ENCODE measurements at regions of chr20 and their contacts with region 1.

Region 1: GRCh38 chr20:62121776-62122631 is at the start of gene LSM14B:
- DNase-seq: peak; percentile 99
- ATAC-seq: peak; percentile 86
- H3K4me3 ChIP-seq: peak within 1 kb of the TSS; percentile 36 to 78 (median 62)
- H3K4me3 Mint-ChIP-seq: peak within 1 kb of the TSS; percentile 92
- H3K27ac ChIP-seq: peak within 1 kb of the TSS; percentile 65 to 91
- H3K27ac Mint-ChIP-seq: peak within 1 kb of the TSS; percentile 90
- H3K4me1 ChIP-seq: peaks cover 18 to 29% of the 10 kb centered on the region in 2 donors
- H3K4me1 Mint-ChIP-seq: peaks cover 21% of the 10 kb centered on the region
- H3K27me3 ChIP-seq: no peaks in the 10 kb centered on the region
- H3K27me3 Mint-ChIP-seq: peaks cover 2% of the 10 kb centered on the region
- CTCF ChIP-seq: no peak
- total RNA-seq, gene LSM14B: 52.8 and 55.0 TPM in 2 replicates

Region 2: DNA sequence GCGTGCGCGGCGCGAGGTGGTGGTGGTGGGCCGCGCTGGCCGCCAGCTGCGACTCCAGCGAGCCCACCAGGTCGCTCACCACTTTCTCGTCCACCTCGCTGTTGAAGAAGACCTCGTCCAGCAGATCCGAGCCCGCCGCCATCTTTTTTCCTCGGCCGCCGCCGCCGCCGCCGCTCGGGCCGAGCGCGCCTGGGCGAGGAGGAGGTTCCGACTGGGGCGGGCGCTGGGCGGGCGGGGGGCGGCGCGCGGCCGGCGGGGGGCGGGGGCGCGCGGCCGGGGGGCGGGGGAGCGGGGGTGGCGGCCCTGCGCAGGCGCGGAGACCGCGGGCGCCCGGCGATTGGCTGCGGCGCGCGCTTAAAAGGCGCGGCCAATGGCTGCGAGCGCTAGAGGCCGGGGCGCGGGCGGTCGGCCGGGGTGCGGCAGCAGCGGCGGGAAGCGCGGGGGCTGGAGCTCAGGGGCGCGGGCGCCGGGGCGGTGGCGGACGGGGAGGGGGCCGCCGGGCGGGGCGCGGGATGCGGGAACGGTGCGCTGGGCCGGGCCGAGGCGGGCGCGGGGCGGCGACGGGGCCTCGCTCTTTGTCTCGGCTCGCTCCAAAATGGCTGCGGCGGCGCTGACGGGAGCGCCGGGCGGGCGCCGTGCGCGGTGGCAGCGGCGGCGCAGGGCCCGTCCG is 56.2 kb before region 1 on chr20 and contains the start of gene TAF4:
- CTCF ChIA-PET with region 1: interaction called, 6 read pairs
- POLR2A ChIA-PET with region 1: interaction called, 21 read pairs
- intact Hi-C with region 1: loop called (anchors 1 kb)
- DNase-seq: peak; percentile 87
- ATAC-seq: peak; percentile 76
- H3K4me3 ChIP-seq: peak within 1 kb of the TSS; percentile 42 to 88 (median 75)
- H3K4me3 Mint-ChIP-seq: peak within 1 kb of the TSS; percentile 93
- H3K27ac ChIP-seq: peak within 1 kb of the TSS; percentile 8 to 72
- H3K27ac Mint-ChIP-seq: peak within 1 kb of the TSS; percentile 92
- H3K4me1 ChIP-seq: peaks cover 31 to 33% of the 10 kb centered on the region in 2 donors
- H3K4me1 Mint-ChIP-seq: peaks cover 45% of the 10 kb centered on the region
- H3K27me3 ChIP-seq: peaks cover 0 to 8% (median 0%) of the 10 kb centered on the region in 4 experiments
- H3K27me3 Mint-ChIP-seq: no peaks in the 10 kb centered on the region
- CTCF ChIP-seq: no peak
- total RNA-seq, gene TAF4: 36.9 and 39.5 TPM in 2 replicates

Region 3: GRCh38 chr20:62143118-62143973 is 21.3 kb after region 1 on chr20 and contains the starts of genes PSMA7 and SS18L1:
- CTCF ChIA-PET with region 1: interaction called, 10 read pairs
- POLR2A ChIA-PET with region 1: interaction called, 6 read pairs
- intact Hi-C with region 1: loop called (anchors 1 kb)
- DNase-seq: peak; percentile 94
- ATAC-seq: peak; percentile 90
- H3K4me3 ChIP-seq: peak within 1 kb of the TSS; percentile 54 to 88 (median 63)
- H3K4me3 Mint-ChIP-seq: peak within 1 kb of the TSS; percentile 91
- H3K27ac ChIP-seq: peak within 1 kb of the TSS; percentile 63 to 75
- H3K27ac Mint-ChIP-seq: peak within 1 kb of the TSS; percentile 92
- H3K4me1 ChIP-seq: peaks cover 24 to 29% of the 10 kb centered on the region in 2 donors
- H3K4me1 Mint-ChIP-seq: peaks cover 40% of the 10 kb centered on the region
- H3K27me3 ChIP-seq: no peaks in the 10 kb centered on the region
- H3K27me3 Mint-ChIP-seq: no peaks in the 10 kb centered on the region
- CTCF ChIP-seq: no peak
- total RNA-seq, gene PSMA7: 140 TPM in 2 replicates
- total RNA-seq, gene SS18L1: 20.7 and 22.0 TPM in 2 replicates

Region 4: GRCh38 chr20:62201173-62202082 is 79.4 kb after region 1 on chr20:
- CTCF ChIA-PET with region 1: no interaction called
- POLR2A ChIA-PET with region 1: no interaction called
- intact Hi-C with region 1: no loop called
- DNase-seq: peak; percentile 49
- ATAC-seq: peak; percentile 88
- H3K4me3 ChIP-seq: peak overlapping the region in 2 of 5 experiments; percentile 21 to 35
- H3K4me3 Mint-ChIP-seq: peak overlapping the region; percentile 80
- H3K27ac ChIP-seq: peak overlapping the region in 1 of 2 donors; percentile 18
- H3K27ac Mint-ChIP-seq: peak overlapping the region; percentile 83
- H3K4me1 ChIP-seq: peaks cover 24 to 28% of the 10 kb centered on the region in 2 donors
- H3K4me1 Mint-ChIP-seq: peaks cover 32% of the 10 kb centered on the region
- H3K27me3 ChIP-seq: no peaks in the 10 kb centered on the region
- H3K27me3 Mint-ChIP-seq: no peaks in the 10 kb centered on the region
- CTCF ChIP-seq: no peak

Region 5: GRCh38 chr20:62237801-62238571 is 116.0 kb after region 1 on chr20 and contains the start of gene OSBPL2:
- CTCF ChIA-PET with region 1: no interaction called
- POLR2A ChIA-PET with region 1: no interaction called
- intact Hi-C with region 1: loop called (anchors 1 kb)
- DNase-seq: peak; percentile 100
- ATAC-seq: peak; percentile 98
- H3K4me3 ChIP-seq: peak within 1 kb of the TSS; percentile 46 to 74 (median 60)
- H3K4me3 Mint-ChIP-seq: peak within 1 kb of the TSS; percentile 90
- H3K27ac ChIP-seq: peak within 1 kb of the TSS; percentile 43 to 83
- H3K27ac Mint-ChIP-seq: peak within 1 kb of the TSS; percentile 96
- H3K4me1 ChIP-seq: peaks cover 17 to 22% of the 10 kb centered on the region in 2 donors
- H3K4me1 Mint-ChIP-seq: peaks cover 30% of the 10 kb centered on the region
- H3K27me3 ChIP-seq: peaks cover 0 to 17% (median 1%) of the 10 kb centered on the region in 4 experiments
- H3K27me3 Mint-ChIP-seq: peaks cover 7% of the 10 kb centered on the region
- CTCF ChIP-seq: no peak
- total RNA-seq, gene OSBPL2: 74.3 and 76.6 TPM in 2 replicates

Region 6: GRCh38 chr20:62977613-62978560 is 855.9 kb after region 1 on chr20:
- CTCF ChIA-PET with region 1: no interaction called
- POLR2A ChIA-PET with region 1: no interaction called
- intact Hi-C with region 1: loop called (anchors 5 kb)
- DNase-seq: peak; percentile 96
- ATAC-seq: peak; percentile 79
- H3K4me3 ChIP-seq: peak overlapping the region in 4 of 5 experiments; percentile 12 to 54 (median 35)
- H3K4me3 Mint-ChIP-seq: peak overlapping the region; percentile 88
- H3K27ac ChIP-seq: no peak overlapping the region
- H3K27ac Mint-ChIP-seq: peak overlapping the region; percentile 91
- H3K4me1 ChIP-seq: peaks cover 63 to 64% of the 10 kb centered on the region in 2 donors
- H3K4me1 Mint-ChIP-seq: peaks cover 51% of the 10 kb centered on the region
- H3K27me3 ChIP-seq: peaks cover 0 to 95% (median 53%) of the 10 kb centered on the region in 4 experiments
- H3K27me3 Mint-ChIP-seq: peaks cover 47% of the 10 kb centered on the region
- CTCF ChIP-seq: no peak